Colonic mucosa (tissue), 4 donors: ENCODE measurements at regions of chr11 and their contacts with region 1.

Region 1: DNA sequence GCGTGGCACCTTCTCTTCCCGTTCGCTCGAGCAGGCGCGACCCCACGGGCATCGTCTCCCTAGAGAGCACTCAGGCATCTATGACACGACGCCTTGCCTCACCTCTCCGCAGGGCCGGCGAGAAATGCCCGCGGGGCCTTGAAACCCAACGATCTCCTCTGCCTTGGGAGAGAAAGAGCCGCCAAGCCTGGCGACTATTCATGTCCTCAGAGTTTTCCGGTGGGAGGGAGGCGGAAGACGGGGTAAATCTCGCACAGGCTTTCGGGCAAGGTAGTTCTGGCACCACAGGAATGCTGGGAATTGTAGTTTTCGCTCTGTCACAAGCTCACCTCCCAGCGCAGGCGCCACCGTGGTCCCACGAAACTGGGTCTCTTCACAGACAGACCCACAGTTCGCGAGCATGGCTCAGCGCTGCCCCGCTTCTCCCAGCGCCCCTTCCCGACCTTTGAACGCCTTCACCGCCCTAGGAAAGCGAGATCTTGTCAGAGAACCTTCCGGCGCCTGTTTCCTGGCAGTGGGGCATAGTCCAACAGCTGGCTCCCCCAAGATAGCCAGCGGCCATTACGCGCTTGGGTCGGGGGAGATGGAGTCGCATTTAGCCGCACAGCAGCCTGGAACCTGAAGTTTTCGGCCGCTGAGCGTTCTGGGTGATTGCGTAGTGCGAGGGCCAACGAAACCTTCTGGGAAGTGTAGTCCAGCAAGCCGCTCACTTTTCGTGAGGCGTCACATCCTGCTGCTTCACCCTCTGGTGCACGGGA is at the start of gene CCDC90B:
- DNase-seq: peak; percentile 96
- H3K4me3 ChIP-seq: peak within 1 kb of the TSS; percentile 68
- H3K27ac ChIP-seq: peak within 1 kb of the TSS; percentile 95
- H3K4me1 ChIP-seq: no peaks in the 10 kb centered on the region
- H3K27me3 ChIP-seq: no peaks in the 10 kb centered on the region
- CTCF ChIP-seq: no peak
- total RNA-seq, gene CCDC90B: 26.1 to 27.3 TPM

Region 2: DNA sequence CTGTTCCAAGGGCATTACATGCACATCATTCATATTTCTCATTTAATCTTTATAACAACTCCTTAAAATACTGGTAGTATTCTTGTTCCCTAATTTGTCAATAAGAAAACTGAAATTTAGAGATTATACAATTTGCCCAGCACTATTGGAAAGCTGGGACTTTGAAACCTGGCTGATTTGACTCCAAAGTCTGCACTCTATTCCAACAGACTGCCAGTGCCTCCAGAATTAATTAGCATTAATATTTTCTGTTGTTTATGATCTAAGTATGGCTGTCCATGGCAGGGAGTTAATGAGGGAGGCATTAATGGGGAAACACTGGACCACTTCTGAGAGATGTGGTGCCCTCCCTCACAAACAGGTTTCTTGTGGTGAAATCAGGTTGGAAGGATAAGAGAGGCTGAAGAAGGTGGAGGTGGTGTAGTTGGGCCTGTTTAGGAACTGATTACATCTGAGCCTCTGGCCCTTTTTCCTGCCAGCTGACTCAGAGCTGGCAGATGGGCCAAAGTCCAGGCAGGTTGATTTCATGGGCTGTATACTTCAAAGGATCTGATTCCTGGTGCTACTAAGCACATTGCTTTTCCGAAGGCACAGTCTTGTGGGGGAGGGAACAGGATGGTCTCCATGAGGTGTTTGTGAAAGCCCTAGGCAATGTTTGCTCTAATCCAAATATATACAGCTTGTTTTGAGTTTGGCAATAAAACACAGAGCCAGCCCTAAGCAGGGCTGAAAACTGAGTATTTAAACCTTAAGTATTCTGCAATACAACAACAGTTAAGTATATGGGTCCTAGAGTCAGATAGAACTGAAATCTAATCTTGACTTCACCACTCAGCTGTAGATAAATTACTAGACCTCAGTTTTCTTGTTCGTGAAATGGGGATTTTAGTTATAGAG is 193.2 kb before region 1 on chr11:
- intact Hi-C with region 1: loop called (anchors 10 kb)
- DNase-seq: peak; percentile 76
- H3K4me3 ChIP-seq: no peak overlapping the region
- H3K27ac ChIP-seq: peak overlapping the region; percentile 48
- H3K4me1 ChIP-seq: peaks cover 6% of the 10 kb centered on the region
- H3K27me3 ChIP-seq: no peaks in the 10 kb centered on the region
- CTCF ChIP-seq: no peak